ENCODE measurements at regions of chr18 and their contacts with region 1.

Region 1: GRCh38 chr18:51110073-51110803 is 80.2 kb downstream of the SMAD4 start:
- H3K4me3 Mint-ChIP-seq: no peak overlapping the region
- H3K27ac Mint-ChIP-seq: no peak overlapping the region
- H3K4me1 Mint-ChIP-seq: peaks cover 17% of the 10 kb centered on the region
- H3K27me3 Mint-ChIP-seq: no peaks in the 10 kb centered on the region

Region 2: DNA sequence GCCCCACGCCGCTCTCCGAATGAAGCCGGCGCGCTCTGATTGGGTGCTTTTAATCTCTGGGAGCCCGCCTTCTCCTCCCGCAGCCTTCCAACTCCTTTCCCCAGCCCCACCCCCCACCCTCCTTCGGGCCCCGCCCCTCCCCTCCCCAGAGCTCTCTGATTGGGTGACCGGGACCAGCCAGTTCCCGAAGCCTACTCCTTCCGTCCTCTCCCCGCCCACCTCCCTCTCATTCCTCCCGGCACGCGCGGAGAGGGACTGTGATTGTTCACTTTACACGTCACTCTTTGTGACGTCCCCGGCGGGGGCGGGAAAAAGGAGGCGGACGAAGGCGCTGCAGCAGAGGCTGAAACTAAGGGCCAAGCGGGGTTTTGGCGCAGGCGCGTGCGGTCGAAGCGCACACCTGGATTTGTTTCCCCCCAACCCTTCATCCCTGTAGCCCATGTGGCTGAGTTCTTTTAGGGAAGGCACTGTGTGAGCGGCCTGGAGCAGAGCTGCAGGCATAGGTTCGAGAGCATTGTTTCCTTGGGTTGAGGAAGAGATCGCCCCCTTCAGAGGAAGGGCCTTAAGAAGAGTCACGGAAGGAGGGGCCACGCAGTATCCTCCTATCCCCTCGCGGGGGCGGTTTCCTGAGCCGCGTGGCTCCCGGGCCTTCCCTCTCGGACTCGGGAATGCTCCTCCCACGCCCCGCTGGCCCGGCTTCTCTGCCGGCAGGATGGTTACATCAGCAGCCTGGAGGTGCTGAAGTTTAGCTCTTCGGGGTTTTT is 87.6 kb after region 1 on chr18 and contains the start of gene MEX3C:
- intact Hi-C with region 1: loop called (anchors 10 kb)
- H3K4me3 Mint-ChIP-seq: peak within 1 kb of the TSS; percentile 90
- H3K27ac Mint-ChIP-seq: peak within 1 kb of the TSS; percentile 94
- H3K4me1 Mint-ChIP-seq: peaks cover 33% of the 10 kb centered on the region
- H3K27me3 Mint-ChIP-seq: no peaks in the 10 kb centered on the region

Region 3: DNA sequence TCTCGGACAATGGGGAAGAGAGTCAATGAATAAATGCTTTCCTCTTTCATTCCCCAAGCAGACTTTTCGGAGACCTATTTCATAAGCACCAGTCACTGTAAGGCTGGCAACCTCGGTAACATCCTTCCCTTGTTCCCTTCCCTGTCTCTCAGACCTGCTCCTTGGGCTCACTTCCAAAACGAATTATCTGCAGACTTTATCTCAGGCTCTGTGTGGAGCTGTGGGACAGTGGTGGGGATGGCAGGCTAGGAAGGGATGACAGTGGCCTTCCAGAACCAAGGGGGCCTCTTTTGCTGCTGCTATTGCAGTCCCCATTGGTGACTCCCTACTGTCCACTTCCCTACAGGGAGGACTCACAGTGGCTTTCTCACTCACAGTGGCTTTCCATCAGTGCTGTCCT is 272.9 kb after region 1 on chr18:
- intact Hi-C with region 1: loop called (anchors 2 kb)
- H3K4me3 Mint-ChIP-seq: no peak overlapping the region
- H3K27ac Mint-ChIP-seq: no peak overlapping the region
- H3K4me1 Mint-ChIP-seq: no peaks in the 10 kb centered on the region
- H3K27me3 Mint-ChIP-seq: peaks cover 2% of the 10 kb centered on the region

Region 4: GRCh38 chr18:52288403-52289004 is 1178.3 kb after region 1 on chr18:
- intact Hi-C with region 1: loop called (anchors 5 kb)
- H3K4me3 Mint-ChIP-seq: no peak overlapping the region
- H3K27ac Mint-ChIP-seq: no peak overlapping the region
- H3K4me1 Mint-ChIP-seq: no peaks in the 10 kb centered on the region
- H3K27me3 Mint-ChIP-seq: no peaks in the 10 kb centered on the region

Region 5: GRCh38 chr18:52995875-52996274 is 1885.6 kb after region 1 on chr18:
- intact Hi-C with region 1: loop called (anchors 5 kb)
- H3K4me3 Mint-ChIP-seq: no peak overlapping the region
- H3K27ac Mint-ChIP-seq: no peak overlapping the region
- H3K4me1 Mint-ChIP-seq: no peaks in the 10 kb centered on the region
- H3K27me3 Mint-ChIP-seq: no peaks in the 10 kb centered on the region

Measured in dendritic cell treated with granulocyte-macrophage colony-stimulating factor and Interleukin-4, amounts not matched to agents 40 ng/mL and 50 ng/mL, for 4 days (primary cell).